Activated CD4-positive, alpha-beta T cell treated with anti-CD3 and anti-CD28 coated beads for 36 hours (primary cell): ENCODE measurements at regions of chr22 and their contacts with region 1.

Region 1: GRCh38 chr22:24208012-24208749 is 26.9 kb downstream of the SUSD2 start:
- DNase-seq: no peak
- ATAC-seq: no peak
- H3K4me3 Mint-ChIP-seq: no peak overlapping the region
- H3K27ac Mint-ChIP-seq: no peak overlapping the region
- H3K4me1 Mint-ChIP-seq: peaks cover 15% of the 10 kb centered on the region
- H3K27me3 Mint-ChIP-seq: no peaks in the 10 kb centered on the region

Region 2: GRCh38 chr22:24146194-24146616 is 62.0 kb before region 1 on chr22:
- CTCF ChIA-PET with region 1: no interaction called
- POLR2A ChIA-PET with region 1: no interaction called
- intact Hi-C with region 1: loop called in 1 of 2 experiments (anchors 10 kb)
- DNase-seq: peak; percentile 32
- ATAC-seq: peak; percentile 54
- H3K4me3 Mint-ChIP-seq: no peak overlapping the region
- H3K27ac Mint-ChIP-seq: peak overlapping the region; percentile 77
- H3K4me1 Mint-ChIP-seq: peaks cover 56% of the 10 kb centered on the region
- H3K27me3 Mint-ChIP-seq: no peaks in the 10 kb centered on the region

Region 3: DNA sequence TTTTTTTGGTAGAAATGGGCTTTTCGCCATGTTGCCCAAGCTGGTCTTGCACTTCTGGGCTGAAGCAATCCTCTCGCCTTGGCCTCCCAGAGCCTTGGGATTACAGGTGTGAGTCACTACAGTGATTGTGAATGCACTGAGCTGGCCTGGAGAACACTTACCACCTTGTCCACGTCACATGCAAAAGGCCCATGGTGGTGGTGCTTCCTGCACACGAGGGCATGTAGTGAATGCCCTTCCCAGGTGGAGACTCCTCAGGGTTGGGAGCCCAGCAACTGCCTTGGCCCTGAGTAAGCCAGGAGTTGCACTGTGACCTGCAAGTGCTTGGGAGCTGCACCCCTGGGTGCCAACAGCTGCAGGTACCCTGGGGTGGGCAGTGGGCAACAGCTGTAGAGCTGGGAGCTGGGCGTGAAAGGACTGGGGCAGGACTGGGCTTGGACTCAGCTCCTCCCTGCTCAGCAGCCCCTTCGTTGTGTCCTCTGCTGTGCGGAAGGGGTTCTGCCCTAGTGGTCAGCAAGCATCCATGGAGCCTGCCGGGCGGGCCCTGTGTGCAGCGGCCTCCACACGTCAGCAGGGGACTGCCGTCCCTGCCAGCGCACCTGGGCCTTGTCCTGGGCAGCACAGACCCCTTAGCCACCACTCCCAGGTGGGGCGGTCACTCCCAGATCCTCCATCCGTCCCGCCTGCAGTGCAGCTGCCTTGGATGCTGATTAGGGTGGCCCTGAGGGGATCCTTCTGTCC is 209.9 kb after region 1 on chr22:
- CTCF ChIA-PET with region 1: no interaction called
- POLR2A ChIA-PET with region 1: interaction called, 11 read pairs
- intact Hi-C with region 1: no loop called
- DNase-seq: no peak
- ATAC-seq: no peak
- H3K4me3 Mint-ChIP-seq: no peak overlapping the region
- H3K27ac Mint-ChIP-seq: no peak overlapping the region
- H3K4me1 Mint-ChIP-seq: no peaks in the 10 kb centered on the region
- H3K27me3 Mint-ChIP-seq: peaks cover 3% of the 10 kb centered on the region